Naive thymus-derived CD4-positive, alpha-beta T cell (primary cell): ENCODE measurements at regions of chr1 and their contacts with region 1.

Region 1: GRCh38 chr1:162561037-162561616 is 395 bp upstream of the UAP1 start:
- DNase-seq: peak; percentile 97 to 99 (median 97)
- ATAC-seq: peak; percentile 97
- H3K4me3 ChIP-seq: peak overlapping the region; percentile 91
- H3K4me3 Mint-ChIP-seq: peak overlapping the region; percentile 89 to 98 (median 96)
- H3K27ac ChIP-seq: peak overlapping the region; percentile 91
- H3K27ac Mint-ChIP-seq: peak overlapping the region; percentile 95 to 99 (median 97)
- H3K4me1 ChIP-seq: peaks cover 10% of the 10 kb centered on the region in 2 donors
- H3K4me1 Mint-ChIP-seq: peaks cover 16 to 51% (median 44%) of the 10 kb centered on the region in 7 donors
- H3K27me3 ChIP-seq: no peaks in the 10 kb centered on the region
- H3K27me3 Mint-ChIP-seq: no peaks in the 10 kb centered on the region

Region 2: DNA sequence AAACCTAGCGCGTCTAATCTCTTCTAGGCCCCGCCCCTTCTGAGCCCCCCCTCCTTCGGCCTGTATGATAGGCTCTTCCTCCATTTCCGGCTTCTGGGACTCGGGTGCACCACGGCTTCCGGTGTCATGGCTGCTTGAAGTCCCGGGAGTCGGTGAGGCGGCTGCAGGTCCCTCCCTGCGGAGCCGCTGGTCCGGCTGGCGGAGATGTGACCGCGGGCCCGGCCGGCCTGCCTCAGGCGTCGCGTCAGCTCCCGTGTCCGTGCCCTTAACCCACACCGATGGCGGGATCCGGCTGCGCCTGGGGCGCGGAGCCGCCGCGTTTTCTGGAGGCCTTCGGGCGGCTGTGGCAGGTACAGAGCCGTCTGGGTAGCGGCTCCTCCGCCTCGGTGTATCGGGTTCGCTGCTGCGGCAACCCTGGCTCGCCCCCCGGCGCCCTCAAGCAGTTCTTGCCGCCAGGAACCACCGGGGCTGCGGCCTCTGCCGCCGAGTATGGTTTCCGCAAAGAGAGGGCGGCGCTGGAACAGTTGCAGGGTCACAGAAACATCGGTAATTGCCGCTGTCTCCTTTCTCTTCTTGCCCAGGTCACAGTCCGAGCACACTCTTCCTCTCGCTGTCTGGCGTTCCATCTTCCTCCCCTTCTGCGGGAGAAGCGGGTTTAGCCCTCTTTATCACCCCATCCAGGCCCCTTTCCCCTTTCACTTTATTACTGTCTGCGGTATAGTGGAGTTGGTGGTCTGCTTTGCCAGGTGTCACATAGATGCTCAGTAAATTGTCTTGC is 63.2 kb before region 1 on chr1 and contains the start of gene UHMK1:
- CTCF ChIA-PET with region 1: no interaction called
- POLR2A ChIA-PET with region 1: interaction called, 16 read pairs
- intact Hi-C with region 1: loop called (anchors 1 kb)
- DNase-seq: peak; percentile 66 to 93 (median 90)
- ATAC-seq: peak; percentile 99
- H3K4me3 ChIP-seq: peak within 1 kb of the TSS; percentile 81
- H3K4me3 Mint-ChIP-seq: peak within 1 kb of the TSS; percentile 83 to 99 (median 92)
- H3K27ac ChIP-seq: peak within 1 kb of the TSS; percentile 90
- H3K27ac Mint-ChIP-seq: peak within 1 kb of the TSS; percentile 88 to 98 (median 94)
- H3K4me1 ChIP-seq: peaks cover 17 to 19% of the 10 kb centered on the region in 2 donors
- H3K4me1 Mint-ChIP-seq: peaks cover 22 to 55% (median 45%) of the 10 kb centered on the region in 7 donors
- H3K27me3 ChIP-seq: no peaks in the 10 kb centered on the region
- H3K27me3 Mint-ChIP-seq: peaks cover 0 to 5% (median 0%) of the 10 kb centered on the region in 5 donors
- total RNA-seq, gene UHMK1: 47.1 to 69.9 (median 66.6) TPM

Region 3: DNA sequence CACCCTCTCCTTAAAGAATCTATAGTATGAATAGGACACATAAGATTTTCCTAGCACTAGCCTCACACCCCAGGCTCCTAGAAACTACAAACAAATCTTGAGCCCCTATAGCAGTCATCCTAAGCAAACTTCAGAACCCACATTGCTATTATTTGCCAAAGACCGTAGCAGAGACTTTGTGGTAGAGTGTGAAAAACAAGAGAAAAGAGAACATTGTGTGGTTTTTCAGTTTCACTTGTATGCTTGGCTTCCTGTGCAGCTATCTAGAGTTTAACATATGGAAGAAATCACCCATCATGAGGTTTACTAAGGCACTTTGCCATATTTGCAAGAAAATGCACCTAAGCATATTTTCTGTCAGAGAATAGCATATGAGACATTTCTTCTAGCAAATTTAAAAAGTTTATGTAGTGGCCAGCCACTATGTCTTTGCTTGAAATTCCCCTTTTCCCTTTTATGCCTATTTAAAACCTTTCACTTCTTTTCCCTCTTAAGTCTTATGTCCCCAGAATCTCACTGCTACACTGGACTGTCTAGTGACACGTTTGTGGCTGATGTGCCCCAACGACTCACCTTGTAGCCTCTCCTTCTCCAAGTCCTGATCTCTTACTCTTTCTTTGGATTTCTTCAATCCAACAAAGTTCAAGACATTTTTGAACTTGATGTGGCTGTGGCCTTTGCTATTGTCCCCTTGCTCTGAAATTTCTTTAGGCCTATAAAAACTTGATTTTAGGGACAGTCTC is 274.2 kb after region 1 on chr1:
- CTCF ChIA-PET with region 1: no interaction called
- POLR2A ChIA-PET with region 1: no interaction called
- intact Hi-C with region 1: no loop called
- DNase-seq: no peak
- ATAC-seq: no peak
- H3K4me3 ChIP-seq: no peak overlapping the region
- H3K4me3 Mint-ChIP-seq: no peak overlapping the region
- H3K27ac ChIP-seq: no peak overlapping the region
- H3K27ac Mint-ChIP-seq: peak overlapping the region in 1 of 9 donors; percentile 4
- H3K4me1 ChIP-seq: no peaks in the 10 kb centered on the region
- H3K4me1 Mint-ChIP-seq: peaks cover 0 to 30% (median 0%) of the 10 kb centered on the region in 7 donors
- H3K27me3 ChIP-seq: no peaks in the 10 kb centered on the region
- H3K27me3 Mint-ChIP-seq: peaks cover 9 to 28% (median 12%) of the 10 kb centered on the region in 5 donors